Dorsolateral prefrontal cortex (tissue), 120 donors: ENCODE measurements at regions of chr14 and their contacts with region 1.

Region 1: DNA sequence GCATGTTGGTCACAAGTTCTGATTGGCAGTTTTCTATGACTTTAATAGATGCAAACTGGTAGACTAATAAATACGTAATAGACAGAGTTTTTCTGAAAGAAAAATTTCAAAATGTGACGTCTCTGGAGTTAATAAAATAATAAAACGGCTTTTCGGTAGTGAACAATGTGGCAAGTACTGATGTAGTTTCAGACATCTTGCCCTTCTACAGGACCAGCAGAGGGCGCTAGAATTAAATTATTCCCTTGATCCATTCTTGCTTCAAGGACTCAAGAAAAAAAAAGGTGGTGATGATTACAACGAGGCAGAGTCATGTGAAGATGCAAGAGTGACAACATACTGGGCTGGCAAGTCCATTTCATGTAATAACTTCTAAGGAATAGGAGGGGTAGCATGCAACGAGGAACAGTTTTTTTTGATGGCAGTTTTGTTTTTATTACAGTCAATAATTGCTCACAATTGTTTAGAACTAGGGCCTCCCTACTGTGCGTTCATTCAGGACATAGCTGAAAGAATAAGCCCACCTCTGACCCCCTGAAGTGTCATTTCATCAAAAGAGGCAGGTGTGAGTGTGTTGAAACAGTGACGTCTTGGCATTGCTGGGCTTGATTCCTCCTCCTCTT is 101.0 kb upstream of the GZMB start:
- DNase-seq: peak in 3 of 10 donors; percentile 11 to 61 (median 38)
- H3K4me3 ChIP-seq: no peak overlapping the region
- H3K27ac ChIP-seq: no peak overlapping the region
- H3K27me3 ChIP-seq: no peaks in the 10 kb centered on the region
- CTCF ChIP-seq: peak; percentile 77 to 98 (median 88)

Region 2: GRCh38 chr14:24789378-24789884 is 54.4 kb after region 1 on chr14:
- intact Hi-C with region 1: loop called in 1 of 2 experiments (anchors 10 kb)
- DNase-seq: no peak
- H3K4me3 ChIP-seq: no peak overlapping the region
- H3K27ac ChIP-seq: no peak overlapping the region
- H3K27me3 ChIP-seq: no peaks in the 10 kb centered on the region
- CTCF ChIP-seq: no peak

Region 3: GRCh38 chr14:25042362-25043299 is 307.6 kb after region 1 on chr14:
- intact Hi-C with region 1: loop called in 1 of 2 experiments (anchors 2 kb)
- DNase-seq: peak in 3 of 10 donors; percentile 34 to 51 (median 40)
- H3K4me3 ChIP-seq: peak overlapping the region in 34 of 59 donors; percentile 2 to 46 (median 26)
- H3K27ac ChIP-seq: peak overlapping the region in 23 of 59 donors; percentile 2 to 65 (median 21)
- H3K27me3 ChIP-seq: no peaks in the 10 kb centered on the region
- CTCF ChIP-seq: peak in 55 of 56 donors; percentile 51 to 87 (median 72)

Region 4: GRCh38 chr14:25132732-25133422 is 397.9 kb after region 1 on chr14:
- intact Hi-C with region 1: loop called in 1 of 2 experiments (anchors 5 kb)
- DNase-seq: peak; percentile 13 to 79 (median 68)
- H3K4me3 ChIP-seq: peak overlapping the region in 45 of 59 donors; percentile 7 to 62 (median 36)
- H3K27ac ChIP-seq: peak overlapping the region in 3 of 59 donors; percentile 20 to 38 (median 32)
- H3K27me3 ChIP-seq: peaks cover 0 to 9% (median 0%) of the 10 kb centered on the region in 45 donors
- CTCF ChIP-seq: peak; percentile 76 to 96 (median 90)

Region 5: DNA sequence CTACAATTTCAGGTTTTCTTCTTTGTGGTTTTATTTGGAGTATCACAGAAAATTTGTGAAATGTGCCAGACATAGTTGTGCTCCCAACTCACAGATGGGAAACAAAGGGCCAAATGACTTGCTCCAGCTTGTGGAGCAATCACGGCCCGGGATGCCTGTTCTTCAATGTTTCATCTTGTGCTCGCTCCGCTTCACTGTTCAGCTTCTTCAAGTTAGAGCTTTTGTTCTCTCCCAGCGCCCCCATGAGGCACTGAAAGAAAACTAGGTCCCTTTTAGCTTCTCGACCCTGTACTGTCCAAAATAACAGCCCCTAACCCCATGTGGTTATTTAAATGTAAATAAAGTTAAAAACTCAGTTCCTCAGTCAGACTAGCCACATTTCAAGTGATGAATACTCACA is 502.9 kb after region 1 on chr14:
- intact Hi-C with region 1: loop called in 1 of 2 experiments (anchors 10 kb)
- DNase-seq: peak in 1 of 10 donors; percentile 40
- H3K4me3 ChIP-seq: no peak overlapping the region
- H3K27ac ChIP-seq: no peak overlapping the region
- H3K27me3 ChIP-seq: peaks cover 0 to 5% (median 0%) of the 10 kb centered on the region in 45 donors
- CTCF ChIP-seq: peak in 40 of 56 donors; percentile 13 to 61 (median 36)